Ascending aorta (tissue), 2 donors: ENCODE measurements at regions of chr17 and their contacts with region 1.

Region 1: GRCh38 chr17:40909351-40909750 is 24.3 kb upstream of the KRT20 start:
- DNase-seq: peak; percentile 20 to 92
- H3K4me3 ChIP-seq: no peak overlapping the region
- H3K27ac ChIP-seq: no peak overlapping the region
- H3K4me1 ChIP-seq: peaks cover 11 to 16% of the 10 kb centered on the region in 2 donors
- H3K27me3 ChIP-seq: no peaks in the 10 kb centered on the region
- CTCF ChIP-seq: peak; percentile 70 to 77 (median 73)

Region 2: GRCh38 chr17:40098846-40099618 is 810.3 kb before region 1 on chr17:
- intact Hi-C with region 1: no loop called
- DNase-seq: peak; percentile 99 to 100
- H3K4me3 ChIP-seq: peak overlapping the region; percentile 89 to 94
- H3K27ac ChIP-seq: peak overlapping the region; percentile 91 to 99
- H3K4me1 ChIP-seq: peaks cover 35 to 70% of the 10 kb centered on the region in 2 donors
- H3K27me3 ChIP-seq: no peaks in the 10 kb centered on the region
- CTCF ChIP-seq: no peak

Region 3: GRCh38 chr17:40779181-40779909 is 130.0 kb before region 1 on chr17:
- intact Hi-C with region 1: no loop called
- DNase-seq: no peak
- H3K4me3 ChIP-seq: no peak overlapping the region
- H3K27ac ChIP-seq: no peak overlapping the region
- H3K4me1 ChIP-seq: no peaks in the 10 kb centered on the region
- H3K27me3 ChIP-seq: no peaks in the 10 kb centered on the region
- CTCF ChIP-seq: no peak

Region 4: DNA sequence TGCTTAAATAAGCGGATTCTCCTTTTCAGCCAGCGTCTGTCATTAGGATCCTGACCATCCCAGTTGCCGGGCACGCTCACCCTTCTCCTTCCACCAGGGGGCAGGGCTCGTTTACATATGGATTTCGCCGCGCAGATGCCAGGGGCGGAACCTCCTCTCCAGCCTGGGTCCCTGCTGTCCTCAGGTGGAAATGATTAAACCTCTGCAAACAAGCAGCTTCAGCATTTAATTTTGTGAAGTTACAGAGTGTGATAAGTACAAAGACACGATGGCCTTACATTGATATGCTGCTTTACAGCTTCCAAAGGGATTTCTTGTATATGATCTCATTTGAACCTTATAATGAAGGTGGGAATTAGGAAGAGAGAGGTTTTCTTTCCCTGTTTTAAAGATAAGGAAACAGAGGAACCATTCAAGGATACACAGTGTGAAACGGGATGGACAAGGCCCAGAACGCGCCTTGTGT is 105.7 kb before region 1 on chr17:
- intact Hi-C with region 1: loop called (anchors 5 kb)
- DNase-seq: peak; percentile 19 to 88
- H3K4me3 ChIP-seq: no peak overlapping the region
- H3K27ac ChIP-seq: no peak overlapping the region
- H3K4me1 ChIP-seq: no peaks in the 10 kb centered on the region
- H3K27me3 ChIP-seq: no peaks in the 10 kb centered on the region
- CTCF ChIP-seq: peak; percentile 74 to 84 (median 76)

Region 5: DNA sequence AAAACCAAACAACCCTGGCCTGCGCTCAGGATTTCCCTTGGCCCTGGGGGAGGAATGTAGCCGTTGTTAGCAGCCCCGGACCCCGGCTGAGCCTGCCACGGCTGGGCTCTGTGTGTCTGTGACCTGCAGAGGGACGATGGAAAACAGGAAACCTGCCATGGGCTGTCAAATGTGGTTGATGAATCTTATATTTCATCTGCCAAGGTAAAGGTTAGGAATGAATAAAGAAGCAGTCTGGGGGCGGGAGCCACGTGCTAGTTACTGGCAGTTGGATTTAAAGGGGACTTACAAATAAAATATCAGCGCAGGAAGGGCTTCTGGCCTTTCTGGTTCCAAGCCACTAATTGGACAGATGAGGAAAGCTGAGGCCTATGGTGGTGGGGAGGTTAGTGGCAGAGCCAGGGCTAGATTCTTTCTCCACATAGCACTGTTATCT is 28.1 kb after region 1 on chr17 and contains the start of gene KRT23:
- intact Hi-C with region 1: no loop called
- DNase-seq: no peak
- H3K4me3 ChIP-seq: no peak within 1 kb of the TSS
- H3K27ac ChIP-seq: no peak within 1 kb of the TSS
- H3K4me1 ChIP-seq: no peaks in the 10 kb centered on the region
- H3K27me3 ChIP-seq: no peaks in the 10 kb centered on the region
- CTCF ChIP-seq: no peak
- total RNA-seq, gene KRT23: not detected

Region 6: GRCh38 chr17:41322094-41322902 is 412.9 kb after region 1 on chr17:
- intact Hi-C with region 1: loop called (anchors 5 kb)
- DNase-seq: no peak
- H3K4me3 ChIP-seq: no peak overlapping the region
- H3K27ac ChIP-seq: no peak overlapping the region
- H3K4me1 ChIP-seq: no peaks in the 10 kb centered on the region
- H3K27me3 ChIP-seq: no peaks in the 10 kb centered on the region
- CTCF ChIP-seq: peak; percentile 30 to 62 (median 52)

Region 7: DNA sequence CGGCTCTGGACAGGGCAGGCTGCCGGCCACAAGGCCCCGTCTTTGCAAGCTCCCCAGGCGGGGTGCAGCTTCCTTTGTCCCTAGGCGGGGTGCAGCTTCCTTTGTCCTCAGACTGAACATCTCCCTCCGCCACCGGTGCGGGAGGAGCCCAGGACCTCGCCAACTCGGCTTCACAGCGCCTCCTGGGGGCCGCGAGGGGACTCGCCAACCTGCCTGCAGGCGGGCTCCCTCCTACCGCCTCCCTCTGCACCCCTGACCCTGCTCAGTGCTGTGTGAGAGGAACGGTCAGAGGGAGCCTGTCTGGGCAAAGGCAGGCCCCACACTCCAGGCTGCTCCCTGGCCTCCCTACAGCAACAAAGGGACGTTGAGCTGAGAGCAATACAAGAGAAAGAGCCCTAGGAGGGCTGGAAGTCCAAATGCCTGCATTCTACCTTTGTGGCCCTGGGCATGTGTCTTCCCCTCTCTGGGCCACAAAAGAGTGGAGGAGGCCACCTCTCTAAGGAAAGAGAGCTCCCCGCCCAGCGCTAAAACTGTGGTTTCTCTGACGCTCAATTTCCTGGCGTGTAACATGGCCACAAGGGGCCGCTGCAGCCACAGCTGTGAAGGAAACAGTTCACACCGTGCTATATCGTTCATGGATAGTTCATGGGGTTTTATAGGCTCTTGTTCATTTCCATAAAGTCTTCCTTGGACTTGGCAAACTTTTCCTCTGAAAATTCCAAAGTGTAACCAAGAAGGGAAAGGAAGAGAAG is 639.7 kb after region 1 on chr17:
- intact Hi-C with region 1: loop called (anchors 1 kb)
- DNase-seq: peak; percentile 27 to 91
- H3K4me3 ChIP-seq: peak overlapping the region; percentile 24 to 50
- H3K27ac ChIP-seq: peak overlapping the region; percentile 65 to 81
- H3K4me1 ChIP-seq: peaks cover 11 to 15% of the 10 kb centered on the region in 2 donors
- H3K27me3 ChIP-seq: no peaks in the 10 kb centered on the region
- CTCF ChIP-seq: peak; percentile 76 to 81 (median 80)